ENCODE measurements at regions of chr5 and their contacts with region 1.

Region 1: GRCh38 chr5:132007399-132008165 is 3.9 kb downstream of the ACSL6 start:
- DNase-seq: peak; percentile 85
- H3K4me3 Mint-ChIP-seq: no peak overlapping the region
- H3K27ac Mint-ChIP-seq: no peak overlapping the region
- H3K4me1 Mint-ChIP-seq: peaks cover 23% of the 10 kb centered on the region
- H3K27me3 Mint-ChIP-seq: peaks cover 17% of the 10 kb centered on the region

Region 2: DNA sequence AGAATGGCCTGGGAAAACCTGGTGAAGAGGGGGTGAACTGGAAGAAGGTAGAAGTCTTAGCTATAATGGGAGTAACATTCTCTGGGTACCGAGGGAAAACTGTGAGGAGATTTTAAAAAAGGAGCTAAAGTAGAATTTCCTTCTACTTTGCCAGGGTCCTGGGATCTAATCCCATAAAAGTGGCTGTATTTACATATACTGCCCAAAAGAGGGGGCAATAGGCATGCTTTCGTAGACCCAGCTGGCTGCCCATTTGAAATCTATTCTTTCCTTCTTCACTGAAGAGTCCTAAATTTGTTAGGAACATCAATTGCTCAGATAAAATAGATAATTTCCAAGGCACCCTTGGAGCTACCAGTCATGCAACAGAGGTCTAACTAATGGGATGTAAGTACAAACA is 584.5 kb before region 1 on chr5:
- CTCF ChIA-PET with region 1: interaction called, 15 read pairs
- POLR2A ChIA-PET with region 1: no interaction called
- intact Hi-C with region 1: loop called (anchors 1 kb)
- DNase-seq: no peak
- H3K4me3 Mint-ChIP-seq: no peak overlapping the region
- H3K27ac Mint-ChIP-seq: no peak overlapping the region
- H3K4me1 Mint-ChIP-seq: peaks cover 17% of the 10 kb centered on the region
- H3K27me3 Mint-ChIP-seq: no peaks in the 10 kb centered on the region

Region 3: DNA sequence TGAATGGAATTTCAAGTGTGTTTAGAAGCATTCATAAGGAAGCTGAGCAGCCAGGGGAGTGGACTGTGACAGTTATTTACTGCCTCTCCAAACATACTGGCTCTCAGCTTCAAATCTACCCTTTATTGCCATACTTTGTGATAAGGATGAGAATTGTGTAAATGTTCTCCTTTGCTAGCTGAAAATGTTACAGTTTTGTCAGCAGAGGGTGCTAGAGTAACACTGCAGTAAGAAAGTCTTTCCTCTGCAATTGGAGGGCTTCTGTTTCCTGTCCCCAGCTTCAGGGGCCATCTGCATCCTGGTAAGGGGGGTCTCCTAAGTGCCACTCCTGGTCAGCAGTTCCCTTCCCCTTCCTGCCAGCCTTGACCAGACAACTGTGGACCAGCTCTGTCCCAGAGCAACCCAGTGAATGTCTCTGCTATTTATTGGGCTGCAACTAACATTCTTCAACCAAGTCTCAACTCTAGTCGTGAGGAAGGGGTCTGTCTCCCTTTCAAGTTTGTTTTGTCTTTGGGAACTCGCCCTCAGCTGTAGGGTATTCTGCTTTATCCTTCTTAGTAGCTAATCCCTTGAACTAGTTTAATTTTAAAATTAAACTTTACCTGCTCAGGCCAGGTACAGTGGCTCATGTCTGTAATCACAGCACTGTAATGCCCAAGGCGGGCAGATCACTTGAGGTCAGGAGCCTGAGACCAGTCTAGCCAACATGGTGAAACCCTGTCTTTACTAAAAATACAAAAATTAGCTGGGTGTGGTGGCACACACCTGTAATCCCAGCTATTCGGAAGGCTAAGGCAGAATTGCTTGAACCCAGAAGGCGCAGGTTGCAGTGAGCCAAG is 417.9 kb before region 1 on chr5:
- CTCF ChIA-PET with region 1: interaction called, 165 read pairs
- POLR2A ChIA-PET with region 1: no interaction called
- intact Hi-C with region 1: loop called (anchors 1 kb)
- DNase-seq: peak; percentile 12
- H3K4me3 Mint-ChIP-seq: no peak overlapping the region
- H3K27ac Mint-ChIP-seq: no peak overlapping the region
- H3K4me1 Mint-ChIP-seq: peaks cover 35% of the 10 kb centered on the region
- H3K27me3 Mint-ChIP-seq: no peaks in the 10 kb centered on the region

Region 4: GRCh38 chr5:131810510-131811249 is 196.9 kb before region 1 on chr5:
- CTCF ChIA-PET with region 1: interaction called, 24 read pairs
- POLR2A ChIA-PET with region 1: no interaction called
- intact Hi-C with region 1: loop called (anchors 1 kb)
- DNase-seq: no peak
- H3K4me3 Mint-ChIP-seq: no peak overlapping the region
- H3K27ac Mint-ChIP-seq: no peak overlapping the region
- H3K4me1 Mint-ChIP-seq: no peaks in the 10 kb centered on the region
- H3K27me3 Mint-ChIP-seq: no peaks in the 10 kb centered on the region

Region 5: GRCh38 chr5:132019857-132020555 is 12.4 kb after region 1 on chr5:
- CTCF ChIA-PET with region 1: interaction called, 10 read pairs
- POLR2A ChIA-PET with region 1: no interaction called
- intact Hi-C with region 1: loop called (anchors 1 kb)
- DNase-seq: peak; percentile 91
- H3K4me3 Mint-ChIP-seq: peak overlapping the region; percentile 11
- H3K27ac Mint-ChIP-seq: peak overlapping the region; percentile 90
- H3K4me1 Mint-ChIP-seq: peaks cover 52% of the 10 kb centered on the region
- H3K27me3 Mint-ChIP-seq: peaks cover 22% of the 10 kb centered on the region

Region 6: DNA sequence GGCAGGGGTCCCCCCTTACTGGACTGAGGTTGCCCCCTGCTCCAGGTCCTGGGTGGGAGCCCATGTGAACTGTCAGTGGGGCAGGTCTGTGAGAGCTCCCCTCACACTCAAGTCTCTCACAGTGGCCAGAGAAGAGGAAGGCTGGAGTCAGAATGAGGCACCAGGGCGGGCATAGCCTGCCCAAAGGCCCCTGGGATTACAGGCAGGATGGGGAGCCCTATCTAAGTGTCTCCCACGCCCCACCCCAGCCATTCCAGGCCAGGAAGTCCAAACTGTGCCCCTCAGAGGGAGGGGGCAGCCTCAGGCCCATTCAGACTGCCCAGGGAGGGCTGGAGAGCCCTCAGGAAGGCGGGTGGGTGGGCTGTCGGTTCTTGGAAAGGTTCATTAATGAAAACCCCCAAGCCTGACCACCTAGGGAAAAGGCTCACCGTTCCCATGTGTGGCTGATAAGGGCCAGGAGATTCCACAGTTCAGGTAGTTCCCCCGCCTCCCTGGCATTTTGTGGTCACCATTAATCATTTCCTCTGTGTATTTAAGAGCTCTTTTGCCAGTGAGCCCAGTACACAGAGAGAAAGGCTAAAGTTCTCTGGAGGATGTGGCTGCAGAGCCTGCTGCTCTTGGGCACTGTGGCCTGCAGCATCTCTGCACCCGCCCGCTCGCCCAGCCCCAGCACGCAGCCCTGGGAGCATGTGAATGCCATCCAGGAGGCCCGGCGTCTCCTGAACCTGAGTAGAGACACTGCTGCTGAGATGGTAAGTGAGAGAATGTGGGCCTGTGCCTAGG is 65.8 kb after region 1 on chr5 and contains the start of gene CSF2:
- CTCF ChIA-PET with region 1: no interaction called
- POLR2A ChIA-PET with region 1: no interaction called
- intact Hi-C with region 1: no loop called
- DNase-seq: peak; percentile 50
- H3K4me3 Mint-ChIP-seq: peak within 1 kb of the TSS; percentile 61
- H3K27ac Mint-ChIP-seq: peak within 1 kb of the TSS; percentile 69
- H3K4me1 Mint-ChIP-seq: peaks cover 56% of the 10 kb centered on the region
- H3K27me3 Mint-ChIP-seq: no peaks in the 10 kb centered on the region
- total RNA-seq, gene CSF2: 125 to 128 TPM

Measured in activated CD4-positive, alpha-beta memory T cell treated with anti-CD3 and anti-CD28 coated beads for 36 hours (primary cell).